ENCODE measurements at regions of chr3 and their contacts with region 1.

Region 1: GRCh38 chr3:10198761-10199649 is 34.3 kb downstream of the IRAK2 start:
- DNase-seq: peak; percentile 80
- ATAC-seq: peak; percentile 87
- H3K4me3 ChIP-seq: no peak overlapping the region
- H3K27ac ChIP-seq: peak overlapping the region; percentile 62
- H3K4me1 ChIP-seq: peaks cover 48% of the 10 kb centered on the region
- H3K27me3 ChIP-seq: no peaks in the 10 kb centered on the region
- CTCF ChIP-seq: no peak
- EP300 ChIP-seq: peak in 1 of 2 experiments; percentile 68; a peak in 1 of 4 replicates
- POLR2A ChIP-seq: peak; percentile 17; the same call in 1 of the 2 replicates
- RAD21 ChIP-seq: no peak

Region 2: DNA sequence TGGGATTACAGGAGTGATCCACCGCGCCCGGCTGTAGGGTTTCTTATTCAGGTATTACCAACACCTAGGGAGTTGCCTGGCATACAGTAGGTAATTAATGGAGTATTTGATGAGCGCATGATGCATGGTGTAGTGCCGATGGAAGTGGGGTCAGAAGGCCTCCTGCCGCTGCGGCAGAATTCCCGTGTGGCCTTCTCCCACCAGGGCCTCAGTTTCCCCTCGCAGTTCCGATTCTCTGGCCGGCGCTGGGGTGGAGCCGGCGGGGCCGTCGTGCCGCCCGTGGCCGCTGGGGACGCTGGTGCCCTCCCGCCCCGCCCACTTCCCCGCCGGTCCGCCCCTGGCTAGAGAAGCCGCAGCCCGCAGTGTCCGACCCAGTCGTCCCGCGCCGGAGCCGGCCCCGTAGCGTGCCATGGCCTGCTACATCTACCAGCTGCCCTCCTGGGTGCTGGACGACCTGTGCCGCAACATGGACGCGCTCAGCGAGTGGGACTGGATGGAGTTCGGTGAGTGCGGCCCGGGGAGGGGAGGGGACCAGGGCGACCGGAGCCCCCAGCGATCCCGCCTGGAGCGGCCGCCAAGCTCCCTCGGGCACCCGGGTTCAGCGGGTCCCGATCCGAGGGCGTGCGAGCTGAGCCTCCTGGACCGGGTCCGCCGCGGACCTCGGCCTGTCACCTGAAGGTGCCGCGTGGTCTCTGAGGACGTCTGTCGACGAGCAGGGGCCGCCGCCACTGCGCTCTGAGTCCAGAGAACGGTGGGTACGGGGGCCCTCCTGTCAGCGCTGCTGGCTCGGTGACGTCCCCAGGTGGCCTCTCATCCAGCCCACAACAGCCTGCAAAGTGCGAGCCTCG is 34.2 kb before region 1 on chr3 and contains the start of gene IRAK2:
- CTCF ChIA-PET with region 1: interaction called, 4 read pairs
- POLR2A ChIA-PET with region 1: interaction called, 13 read pairs
- RAD21 ChIA-PET with region 1: interaction called, 7 read pairs
- SMC1A ChIA-PET with region 1: interaction called, 34 read pairs
- in situ Hi-C with region 1: no loop called
- intact Hi-C with region 1: loop called (anchors 2 kb)
- DNase-seq: no peak
- ATAC-seq: peak; percentile 92
- H3K4me3 ChIP-seq: peak within 1 kb of the TSS; percentile 94
- H3K27ac ChIP-seq: no peak within 1 kb of the TSS
- H3K4me1 ChIP-seq: peaks cover 7% of the 10 kb centered on the region; the same call in 1 of the 2 replicates
- H3K27me3 ChIP-seq: no peaks in the 10 kb centered on the region
- CTCF ChIP-seq: peak; percentile 76 to 86 (median 81)
- EP300 ChIP-seq: no peak
- POLR2A ChIP-seq: peak; percentile 79
- RAD21 ChIP-seq: peak; percentile 22; the same call in 1 of the 2 replicates
- polyA plus RNA-seq, gene IRAK2: 0.48 to 0.88 TPM

Region 3: GRCh38 chr3:10219737-10220136 is 20.7 kb after region 1 on chr3:
- CTCF ChIA-PET with region 1: interaction called, 31 read pairs
- POLR2A ChIA-PET with region 1: interaction called, 64 read pairs
- RAD21 ChIA-PET with region 1: interaction called, 99 read pairs
- SMC1A ChIA-PET with region 1: interaction called, 165 read pairs
- in situ Hi-C with region 1: no loop called
- intact Hi-C with region 1: loop called (anchors 1 kb)
- DNase-seq: no peak
- ATAC-seq: no peak
- H3K4me3 ChIP-seq: no peak overlapping the region
- H3K27ac ChIP-seq: no peak overlapping the region
- H3K4me1 ChIP-seq: peaks cover 37% of the 10 kb centered on the region
- H3K27me3 ChIP-seq: no peaks in the 10 kb centered on the region
- CTCF ChIP-seq: no peak
- EP300 ChIP-seq: no peak
- POLR2A ChIP-seq: no peak
- RAD21 ChIP-seq: no peak

Region 4: GRCh38 chr3:10977892-10978510 is 779.0 kb after region 1 on chr3:
- CTCF ChIA-PET with region 1: no interaction called
- POLR2A ChIA-PET with region 1: no interaction called
- RAD21 ChIA-PET with region 1: no interaction called
- SMC1A ChIA-PET with region 1: no interaction called
- in situ Hi-C with region 1: no loop called
- intact Hi-C with region 1: no loop called
- DNase-seq: no peak
- ATAC-seq: no peak
- H3K4me3 ChIP-seq: no peak overlapping the region
- H3K27ac ChIP-seq: no peak overlapping the region
- H3K4me1 ChIP-seq: no peaks in the 10 kb centered on the region
- H3K27me3 ChIP-seq: no peaks in the 10 kb centered on the region
- CTCF ChIP-seq: no peak
- EP300 ChIP-seq: no peak
- POLR2A ChIP-seq: no peak
- RAD21 ChIP-seq: no peak

Measured in GM12878 (cell line).